ENCODE measurements at regions of chr6 and their contacts with region 1.

Region 1: GRCh38 chr6:107419733-107420132 is 39.6 kb downstream of the PDSS2 start:
- DNase-seq: no peak
- ATAC-seq: no peak
- H3K4me3 ChIP-seq: no peak overlapping the region
- H3K27ac ChIP-seq: no peak overlapping the region
- H3K4me1 ChIP-seq: peaks cover 0 to 9% (median under 1%) of the 10 kb centered on the region in 12 donors
- H3K27me3 ChIP-seq: no peaks in the 10 kb centered on the region
- CTCF ChIP-seq: no peak
- POLR2A ChIP-seq: no peak

Region 2: GRCh38 chr6:107330168-107330567 is 89.6 kb before region 1 on chr6:
- intact Hi-C with region 1: no loop called
- DNase-seq: no peak
- ATAC-seq: no peak
- H3K4me3 ChIP-seq: no peak overlapping the region
- H3K27ac ChIP-seq: no peak overlapping the region
- H3K4me1 ChIP-seq: no peaks in the 10 kb centered on the region
- H3K27me3 ChIP-seq: no peaks in the 10 kb centered on the region
- CTCF ChIP-seq: no peak
- POLR2A ChIP-seq: no peak

Region 3: GRCh38 chr6:107408723-107409122 is 11.0 kb before region 1 on chr6:
- intact Hi-C with region 1: loop called in 1 of 10 experiments (anchors 1 kb)
- DNase-seq: no peak
- ATAC-seq: no peak
- H3K4me3 ChIP-seq: no peak overlapping the region
- H3K27ac ChIP-seq: no peak overlapping the region
- H3K4me1 ChIP-seq: peaks cover 0 to 13% (median 2%) of the 10 kb centered on the region in 12 donors
- H3K27me3 ChIP-seq: no peaks in the 10 kb centered on the region
- CTCF ChIP-seq: no peak
- POLR2A ChIP-seq: no peak